Endothelial cell of umbilical vein (primary cell): ENCODE measurements at regions of chr19 and their contacts with region 1.

Region 1: DNA sequence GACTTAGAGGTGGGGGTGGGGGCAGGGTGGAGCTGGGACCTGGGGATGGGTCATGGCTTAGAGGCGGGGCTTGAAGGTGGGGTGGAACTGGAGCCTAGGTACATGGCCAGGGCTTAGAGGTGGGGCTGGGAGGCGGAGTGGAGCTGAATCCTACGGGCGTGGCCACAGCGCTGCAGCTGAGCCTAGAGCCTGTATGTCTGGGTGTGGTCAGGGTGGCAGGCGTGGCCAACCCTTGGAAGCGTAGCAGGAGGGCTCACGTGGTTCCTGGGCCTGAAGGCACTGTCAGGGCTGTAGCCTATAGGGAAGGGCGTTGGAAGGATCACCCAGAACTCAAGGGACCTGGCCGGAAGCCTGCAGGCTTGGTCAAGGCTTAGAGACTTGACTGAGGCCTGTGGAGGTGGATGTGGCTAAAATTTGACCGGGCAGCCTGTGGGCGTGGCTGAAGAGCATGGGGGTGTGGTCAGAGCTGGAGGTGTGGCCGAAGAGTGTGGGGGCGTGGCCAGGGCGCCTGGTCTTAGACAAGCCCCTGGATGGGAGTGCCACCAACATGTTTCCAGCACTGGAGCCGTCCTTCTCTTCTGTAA is 24.3 kb downstream of the COLGALT1 start:
- DNase-seq: peak; percentile 39
- H3K4me3 ChIP-seq: no peak overlapping the region
- H3K27ac ChIP-seq: no peak overlapping the region
- H3K4me1 ChIP-seq: no peaks in the 10 kb centered on the region
- H3K27me3 ChIP-seq: no peaks in the 10 kb centered on the region
- CTCF ChIP-seq: no peak
- POLR2A ChIP-seq: no peak

Region 2: DNA sequence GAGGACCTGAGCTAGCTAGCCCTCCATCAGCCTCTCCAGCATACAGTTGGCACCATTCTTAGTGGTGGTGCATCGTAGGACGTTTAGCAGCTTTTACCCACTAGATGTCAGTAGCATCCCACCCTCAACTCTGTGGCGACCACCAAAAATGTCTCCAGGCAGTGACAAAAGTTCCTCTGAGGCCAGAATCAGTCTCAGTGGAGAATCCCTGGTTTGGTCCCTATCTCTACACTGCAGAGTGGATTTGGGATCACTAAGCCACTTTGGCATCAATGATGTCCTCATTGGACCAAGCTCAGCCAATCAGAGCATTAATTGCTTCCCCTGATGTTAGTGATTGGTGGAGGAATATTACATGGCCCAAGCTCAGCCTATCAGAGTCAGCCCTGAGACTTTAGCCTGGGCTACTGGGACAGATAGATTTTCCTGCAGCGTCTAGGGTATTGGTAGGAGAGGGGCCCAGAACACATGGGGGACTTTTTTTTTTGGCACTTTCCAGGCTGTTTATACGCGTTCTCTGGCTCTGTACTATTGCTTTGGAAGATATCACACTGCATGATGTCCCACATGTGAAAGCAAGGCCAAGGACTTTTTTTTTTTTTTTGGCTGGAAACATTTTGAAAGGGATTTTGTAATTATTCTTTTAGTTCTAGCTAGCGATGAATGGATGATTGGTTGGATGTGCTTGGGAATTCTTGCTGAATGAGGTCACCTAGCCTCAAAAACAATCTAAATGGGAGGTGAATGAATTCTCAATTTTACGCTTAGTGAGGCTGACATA is 138.3 kb before region 1 on chr19:
- CTCF ChIA-PET with region 1: interaction called, 14 read pairs
- POLR2A ChIA-PET with region 1: no interaction called
- dilution Hi-C with region 1: no loop called
- intact Hi-C with region 1: no loop called
- DNase-seq: peak; percentile 28
- H3K4me3 ChIP-seq: no peak overlapping the region
- H3K27ac ChIP-seq: no peak overlapping the region
- H3K4me1 ChIP-seq: no peaks in the 10 kb centered on the region
- H3K27me3 ChIP-seq: peaks cover 2 to 3% of the 10 kb centered on the region in 2 experiments
- CTCF ChIP-seq: peak; percentile 37 to 57
- POLR2A ChIP-seq: no peak

Region 3: DNA sequence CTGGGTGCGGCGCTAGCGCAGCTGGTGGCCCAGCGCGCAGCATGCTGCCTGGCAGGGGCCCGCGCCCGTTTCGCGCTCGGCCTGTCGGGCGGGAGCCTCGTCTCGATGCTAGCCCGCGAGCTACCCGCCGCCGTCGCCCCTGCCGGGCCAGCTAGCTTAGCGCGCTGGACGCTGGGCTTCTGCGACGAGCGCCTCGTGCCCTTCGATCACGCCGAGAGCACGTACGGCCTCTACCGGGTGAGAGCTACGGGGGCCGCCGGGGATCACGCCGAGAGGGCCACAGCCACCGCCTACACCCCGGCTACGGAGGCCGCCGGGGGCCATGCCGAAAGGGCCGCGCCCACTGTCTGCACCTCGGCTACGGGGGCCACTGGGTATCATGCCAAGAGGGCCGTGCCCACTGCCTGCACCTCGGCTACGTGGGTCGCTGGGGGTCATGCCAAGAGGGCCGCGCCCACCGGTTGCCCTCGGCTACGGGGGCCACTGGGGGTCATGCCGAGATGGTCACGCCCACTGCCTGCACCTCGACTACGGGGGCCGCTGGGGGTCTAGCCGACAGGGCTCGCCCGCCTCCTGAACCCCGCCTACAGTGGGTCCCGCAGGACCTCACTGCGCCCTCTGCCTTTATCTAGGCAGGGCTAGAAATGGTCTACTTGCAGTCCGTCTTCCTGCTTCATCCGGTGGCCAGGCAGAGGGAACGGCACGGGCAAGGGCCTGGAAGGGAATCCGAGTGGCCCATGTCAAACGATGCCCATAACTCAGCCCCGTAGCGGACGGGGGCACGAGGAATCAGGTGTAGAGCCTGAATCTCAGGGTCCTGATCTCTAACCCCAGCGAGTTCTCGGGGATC is 67.8 kb before region 1 on chr19:
- CTCF ChIA-PET with region 1: interaction called, 17 read pairs
- POLR2A ChIA-PET with region 1: no interaction called
- dilution Hi-C with region 1: no loop called
- intact Hi-C with region 1: no loop called
- DNase-seq: peak; percentile 84
- H3K4me3 ChIP-seq: peak overlapping the region; percentile 81 to 82 (median 81)
- H3K27ac ChIP-seq: peak overlapping the region; percentile 69
- H3K4me1 ChIP-seq: peaks cover 13% of the 10 kb centered on the region
- H3K27me3 ChIP-seq: no peaks in the 10 kb centered on the region
- CTCF ChIP-seq: peak in 1 of 2 donors; percentile 14
- POLR2A ChIP-seq: no peak

Region 4: DNA sequence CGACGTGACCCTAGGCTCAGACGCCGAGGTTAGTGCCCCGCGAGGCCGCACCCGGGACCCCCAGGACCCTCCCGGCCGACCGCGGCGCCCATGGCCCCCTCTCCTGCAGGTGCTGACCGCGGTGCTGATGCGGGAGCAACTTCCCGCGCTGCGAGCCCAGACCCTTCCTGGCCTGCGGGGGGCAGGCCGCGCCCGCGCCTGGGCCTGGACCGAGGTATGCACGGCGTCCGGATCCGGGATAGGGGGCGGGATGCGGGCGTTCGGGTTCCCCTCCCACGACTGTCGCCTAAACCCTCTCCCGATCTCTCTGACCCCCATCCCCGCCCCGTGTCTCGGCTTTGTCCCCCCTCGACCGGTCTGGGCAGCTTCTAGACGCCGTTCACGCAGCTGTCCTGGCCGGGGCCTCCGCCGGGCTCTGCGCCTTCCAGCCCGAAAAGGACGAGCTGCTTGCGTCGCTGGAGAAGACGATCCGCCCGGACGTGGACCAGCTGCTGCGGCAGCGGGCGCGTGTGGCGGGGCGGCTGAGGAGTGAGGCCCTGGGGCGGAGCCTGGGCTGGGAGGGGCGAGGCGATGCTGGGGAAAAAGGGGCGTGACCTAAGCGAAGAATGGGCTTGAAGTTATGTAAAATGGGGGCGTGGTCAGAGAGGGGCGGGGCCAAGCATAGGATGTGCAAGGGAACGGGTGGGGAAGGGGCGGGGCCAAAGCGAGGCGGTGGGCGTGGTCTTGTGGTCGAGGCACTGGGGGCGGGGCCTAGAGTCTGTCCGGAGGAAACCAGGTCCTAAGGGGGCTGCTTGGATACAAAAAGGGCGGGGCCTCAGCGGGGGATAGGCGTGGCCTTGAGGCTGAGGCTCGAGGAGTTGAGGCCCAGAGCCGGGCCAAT is 40.3 kb before region 1 on chr19:
- CTCF ChIA-PET with region 1: interaction called, 25 read pairs
- POLR2A ChIA-PET with region 1: no interaction called
- dilution Hi-C with region 1: no loop called
- intact Hi-C with region 1: loop called (anchors 1 kb)
- DNase-seq: peak; percentile 93
- H3K4me3 ChIP-seq: peak overlapping the region in 2 of 3 experiments; percentile 6 to 38
- H3K27ac ChIP-seq: no peak overlapping the region
- H3K4me1 ChIP-seq: peaks cover 7% of the 10 kb centered on the region
- H3K27me3 ChIP-seq: no peaks in the 10 kb centered on the region
- CTCF ChIP-seq: peak in 1 of 2 donors; percentile 67
- POLR2A ChIP-seq: no peak